ENCODE measurements at regions of chr12 and their contacts with region 1.

Region 1: DNA sequence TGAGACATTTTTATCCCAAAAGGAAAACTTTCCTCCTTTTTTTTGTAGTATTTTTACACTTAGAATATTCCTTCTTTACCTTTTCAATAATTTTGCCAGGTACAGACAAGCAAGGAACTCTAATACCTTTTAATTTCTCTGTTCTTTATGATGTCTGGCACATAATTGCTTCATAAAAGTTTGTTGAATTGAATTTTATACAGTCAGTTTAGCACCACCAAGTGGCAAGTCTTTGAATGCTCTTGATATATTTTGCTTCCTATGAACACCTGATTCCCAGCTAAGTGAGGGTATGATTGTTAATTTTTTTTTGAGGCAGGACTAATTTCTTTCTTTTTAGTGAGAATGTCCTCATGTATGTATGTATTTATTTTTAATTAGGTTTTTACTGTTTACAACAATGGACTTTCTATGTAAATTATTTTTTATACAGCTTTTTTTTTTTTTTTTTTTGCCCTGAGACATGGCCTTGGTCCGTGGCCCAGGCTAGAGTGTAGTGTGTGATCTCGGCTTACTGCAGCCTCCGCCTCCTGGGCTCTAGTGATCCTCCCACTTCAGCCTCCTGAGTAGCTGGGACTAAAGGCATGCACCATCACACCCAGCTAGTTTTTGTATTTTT is 6.9 kb downstream of the TBC1D15 start:
- DNase-seq: no peak
- H3K4me3 ChIP-seq: no peak overlapping the region
- H3K27ac ChIP-seq: no peak overlapping the region
- H3K4me1 ChIP-seq: peaks cover 6% of the 10 kb centered on the region
- H3K27me3 ChIP-seq: no peaks in the 10 kb centered on the region
- CTCF ChIP-seq: peak in 3 of 4 experiments; percentile 49 to 67 (median 61)
- POLR2A ChIP-seq: no peak

Region 2: GRCh38 chr12:71780237-71780822 is 66.1 kb before region 1 on chr12:
- intact Hi-C with region 1: loop called (anchors 5 kb)
- DNase-seq: peak; percentile 20
- H3K4me3 ChIP-seq: no peak overlapping the region
- H3K27ac ChIP-seq: no peak overlapping the region
- H3K4me1 ChIP-seq: no peaks in the 10 kb centered on the region
- H3K27me3 ChIP-seq: no peaks in the 10 kb centered on the region
- CTCF ChIP-seq: peak in 3 of 4 experiments; percentile 69 to 76 (median 69)
- POLR2A ChIP-seq: no peak

Region 3: GRCh38 chr12:71900091-71900490 is 53.7 kb after region 1 on chr12:
- intact Hi-C with region 1: no loop called
- DNase-seq: no peak
- H3K4me3 ChIP-seq: no peak overlapping the region
- H3K27ac ChIP-seq: no peak overlapping the region
- H3K4me1 ChIP-seq: no peaks in the 10 kb centered on the region
- H3K27me3 ChIP-seq: no peaks in the 10 kb centered on the region
- CTCF ChIP-seq: no peak
- POLR2A ChIP-seq: no peak